H1 (cell line): ENCODE measurements at regions of chr2 and their contacts with region 1.

Region 1: DNA sequence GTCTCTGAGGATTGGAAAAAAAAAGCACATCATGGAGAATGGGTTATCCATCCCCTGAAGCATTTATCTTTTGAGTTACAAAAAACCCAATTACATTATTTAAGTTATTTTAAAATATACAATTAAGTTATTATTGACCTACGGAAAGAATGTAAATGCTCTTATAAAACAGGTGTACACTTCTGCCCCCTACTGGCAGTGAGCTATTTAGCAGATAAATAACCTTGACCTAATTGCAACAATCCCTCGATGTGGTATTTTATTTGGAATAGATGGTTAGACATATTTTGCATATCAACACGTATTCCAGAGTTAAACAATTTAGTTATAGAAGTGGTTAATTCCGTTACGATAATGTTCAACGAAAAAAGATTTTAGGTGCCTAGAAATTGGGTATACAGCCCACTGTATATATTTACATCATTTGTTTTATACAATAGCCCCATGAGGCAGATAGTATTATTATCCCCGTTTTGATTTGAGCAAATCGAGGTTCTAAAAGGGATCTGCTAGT is 9.1 kb upstream of the DAW1 start:
- DNase-seq: no peak
- H3K4me3 ChIP-seq: no peak overlapping the region
- H3K27ac ChIP-seq: no peak overlapping the region
- H3K4me1 ChIP-seq: peaks cover 3 to 11% (median 5%) of the 10 kb centered on the region in 4 experiments; a peak in 6 of 7 replicates
- H3K27me3 ChIP-seq: no peaks in the 10 kb centered on the region
- CTCF ChIP-seq: peak in 2 of 3 experiments; percentile 42 to 57; a peak in 2 of 4 replicates
- EP300 ChIP-seq: no peak
- POLR2A ChIP-seq: no peak
- RAD21 ChIP-seq: peak; percentile 48 to 50

Region 2: DNA sequence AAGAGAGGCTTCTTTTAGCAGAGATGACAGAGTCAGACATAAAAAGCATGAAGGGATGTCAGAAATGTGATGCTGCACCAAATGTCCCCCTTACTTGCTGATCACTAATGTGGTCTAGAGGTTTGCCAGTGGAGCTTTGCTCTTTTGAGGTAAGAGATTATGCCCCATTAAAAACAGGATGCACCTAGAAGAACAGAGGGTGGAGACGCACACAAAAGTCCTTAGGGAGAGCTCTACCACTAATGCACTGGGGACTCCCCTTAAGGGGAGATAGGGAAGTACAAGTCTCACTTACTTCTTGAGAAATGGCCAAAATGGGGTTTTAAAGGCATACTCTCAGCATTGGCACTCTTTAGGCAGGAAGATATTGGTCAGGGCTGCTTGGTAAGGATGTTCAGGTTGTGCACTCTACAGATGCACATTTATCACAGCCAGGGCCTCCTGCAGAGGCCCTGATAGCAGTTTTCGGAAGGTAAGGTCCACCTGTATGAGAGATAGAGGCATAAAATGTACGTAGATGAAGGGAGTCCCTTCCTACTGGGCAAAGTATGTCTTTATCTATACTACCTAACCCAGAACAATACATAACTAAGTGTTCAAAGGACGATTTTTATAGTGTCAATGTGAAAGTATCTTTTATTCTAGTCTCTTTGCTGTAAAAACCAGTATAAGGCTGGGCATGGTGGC is 457.6 kb before region 1 on chr2:
- CTCF ChIA-PET with region 1: no interaction called
- POLR2A ChIA-PET with region 1: no interaction called
- DNase-seq: no peak
- H3K4me3 ChIP-seq: no peak overlapping the region
- H3K27ac ChIP-seq: no peak overlapping the region
- H3K4me1 ChIP-seq: no peaks in the 10 kb centered on the region
- H3K27me3 ChIP-seq: no peaks in the 10 kb centered on the region
- CTCF ChIP-seq: peak in 1 of 3 experiments; percentile 17; a peak in 1 of 4 replicates
- EP300 ChIP-seq: no peak
- POLR2A ChIP-seq: no peak
- RAD21 ChIP-seq: no peak

Region 3: DNA sequence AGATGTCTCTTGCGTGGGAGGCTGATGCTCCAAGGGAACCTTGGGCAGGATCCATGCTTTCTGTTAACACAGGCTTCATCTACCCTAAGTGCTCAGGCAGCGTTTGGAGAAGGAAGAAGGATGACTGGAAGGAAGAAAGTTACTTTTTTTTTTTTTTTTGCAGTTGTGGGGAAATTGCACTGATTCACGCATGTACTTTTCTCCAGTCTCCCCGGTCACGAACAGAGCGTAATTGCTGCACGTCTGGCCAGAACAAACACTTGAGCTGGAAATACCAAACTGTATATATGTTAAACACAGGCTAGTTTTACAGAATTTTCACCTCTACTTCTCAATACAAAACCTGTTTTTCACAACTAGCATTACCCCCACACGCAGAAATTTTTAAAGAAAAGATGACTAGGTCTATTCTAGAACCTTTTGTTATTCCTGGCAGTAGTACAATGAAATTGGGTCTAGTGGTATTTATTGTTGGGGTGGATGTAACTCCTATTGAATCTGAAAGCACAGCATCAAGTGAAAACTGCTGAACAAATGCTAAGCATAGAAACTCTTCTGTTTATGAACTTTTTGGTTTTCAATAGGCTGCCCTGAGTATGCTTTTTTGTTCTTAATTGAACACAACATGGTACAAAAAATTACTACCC is 205.0 kb before region 1 on chr2:
- CTCF ChIA-PET with region 1: interaction called, 17 read pairs
- POLR2A ChIA-PET with region 1: no interaction called
- DNase-seq: no peak
- H3K4me3 ChIP-seq: no peak overlapping the region
- H3K27ac ChIP-seq: no peak overlapping the region
- H3K4me1 ChIP-seq: peaks cover 0 to 10% (median 4%) of the 10 kb centered on the region in 4 experiments; a peak in 4 of 7 replicates
- H3K27me3 ChIP-seq: no peaks in the 10 kb centered on the region
- CTCF ChIP-seq: no peak
- EP300 ChIP-seq: no peak
- POLR2A ChIP-seq: no peak
- RAD21 ChIP-seq: no peak

Region 4: DNA sequence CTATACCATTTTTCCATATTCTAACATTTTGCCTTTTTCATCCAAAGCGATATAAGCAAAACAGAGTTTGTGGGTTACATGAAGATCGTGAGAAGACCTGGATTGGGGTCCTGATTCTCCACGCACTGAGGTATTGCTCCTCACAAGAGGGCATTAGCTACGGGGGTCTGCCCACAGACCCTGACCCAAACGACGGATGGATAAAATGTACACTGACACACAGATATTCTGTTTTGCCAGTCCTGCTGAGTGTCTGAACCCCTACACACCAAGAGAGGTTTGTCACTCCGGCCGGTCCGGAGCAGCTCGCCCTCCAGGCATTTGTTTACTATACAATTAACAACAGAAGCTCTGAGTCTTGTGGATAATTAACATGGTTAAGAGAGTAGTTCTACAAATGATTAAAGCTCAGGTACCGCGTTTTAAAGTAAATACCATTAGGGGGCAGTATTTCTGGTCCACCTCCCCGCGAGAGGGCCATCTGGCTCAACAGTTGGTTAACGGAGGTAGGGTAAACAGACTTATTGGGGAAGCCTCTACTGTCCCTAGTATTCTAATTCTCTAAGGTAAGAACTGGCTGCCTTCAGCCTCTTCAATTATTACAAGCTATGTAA is 88.2 kb before region 1 on chr2:
- CTCF ChIA-PET with region 1: interaction called, 38 read pairs
- POLR2A ChIA-PET with region 1: no interaction called
- DNase-seq: peak in 1 of 2 experiments; percentile 49
- H3K4me3 ChIP-seq: no peak overlapping the region
- H3K27ac ChIP-seq: no peak overlapping the region
- H3K4me1 ChIP-seq: peaks cover 1 to 8% (median 3%) of the 10 kb centered on the region in 4 experiments; a peak in 3 of 7 replicates
- H3K27me3 ChIP-seq: no peaks in the 10 kb centered on the region
- CTCF ChIP-seq: peak; percentile 36 to 66 (median 56)
- EP300 ChIP-seq: no peak
- POLR2A ChIP-seq: no peak
- RAD21 ChIP-seq: peak; percentile 50 to 56

Region 5: GRCh38 chr2:227793148-227793712 is 69.1 kb before region 1 on chr2:
- CTCF ChIA-PET with region 1: interaction called, 15 read pairs
- POLR2A ChIA-PET with region 1: no interaction called
- DNase-seq: no peak
- H3K4me3 ChIP-seq: no peak overlapping the region
- H3K27ac ChIP-seq: no peak overlapping the region
- H3K4me1 ChIP-seq: no peaks in the 10 kb centered on the region
- H3K27me3 ChIP-seq: peaks cover 0 to 1% (median 0%) of the 10 kb centered on the region in 4 experiments; a peak in 1 of 7 replicates
- CTCF ChIP-seq: no peak
- EP300 ChIP-seq: no peak
- POLR2A ChIP-seq: no peak
- RAD21 ChIP-seq: no peak

Region 6: GRCh38 chr2:227817850-227818674 is 44.2 kb before region 1 on chr2:
- CTCF ChIA-PET with region 1: interaction called, 15 read pairs
- POLR2A ChIA-PET with region 1: no interaction called
- DNase-seq: peak in 1 of 2 experiments; percentile 15
- H3K4me3 ChIP-seq: no peak overlapping the region
- H3K27ac ChIP-seq: no peak overlapping the region
- H3K4me1 ChIP-seq: peaks cover 0 to 4% (median 2%) of the 10 kb centered on the region in 4 experiments; a peak in 3 of 7 replicates
- H3K27me3 ChIP-seq: no peaks in the 10 kb centered on the region; a peak in 1 of 7 replicates
- CTCF ChIP-seq: no peak
- EP300 ChIP-seq: no peak
- POLR2A ChIP-seq: no peak
- RAD21 ChIP-seq: no peak

Region 7: GRCh38 chr2:227848586-227848985 is 13.7 kb before region 1 on chr2:
- CTCF ChIA-PET with region 1: interaction called, 24 read pairs
- POLR2A ChIA-PET with region 1: no interaction called
- DNase-seq: no peak
- H3K4me3 ChIP-seq: no peak overlapping the region
- H3K27ac ChIP-seq: no peak overlapping the region
- H3K4me1 ChIP-seq: no peaks in the 10 kb centered on the region; a peak in 1 of 7 replicates
- H3K27me3 ChIP-seq: no peaks in the 10 kb centered on the region
- CTCF ChIP-seq: no peak
- EP300 ChIP-seq: no peak
- POLR2A ChIP-seq: no peak
- RAD21 ChIP-seq: no peak

Region 8: GRCh38 chr2:227884511-227884947 is 22.2 kb after region 1 on chr2:
- CTCF ChIA-PET with region 1: interaction called, 11 read pairs
- POLR2A ChIA-PET with region 1: no interaction called
- DNase-seq: peak; percentile 84 to 93
- H3K4me3 ChIP-seq: no peak overlapping the region
- H3K27ac ChIP-seq: no peak overlapping the region
- H3K4me1 ChIP-seq: no peaks in the 10 kb centered on the region
- H3K27me3 ChIP-seq: no peaks in the 10 kb centered on the region
- CTCF ChIP-seq: peak; percentile 94 to 98 (median 97)
- EP300 ChIP-seq: no peak
- POLR2A ChIP-seq: no peak
- RAD21 ChIP-seq: peak; percentile 67 to 78

Region 9: GRCh38 chr2:227960317-227960716 is 98.0 kb after region 1 on chr2:
- CTCF ChIA-PET with region 1: no interaction called
- POLR2A ChIA-PET with region 1: no interaction called
- DNase-seq: no peak
- H3K4me3 ChIP-seq: no peak overlapping the region
- H3K27ac ChIP-seq: no peak overlapping the region
- H3K4me1 ChIP-seq: no peaks in the 10 kb centered on the region
- H3K27me3 ChIP-seq: no peaks in the 10 kb centered on the region
- CTCF ChIP-seq: no peak
- EP300 ChIP-seq: no peak
- POLR2A ChIP-seq: no peak
- RAD21 ChIP-seq: no peak

Region 10: GRCh38 chr2:228164718-228165117 is 302.4 kb after region 1 on chr2:
- CTCF ChIA-PET with region 1: no interaction called
- POLR2A ChIA-PET with region 1: no interaction called
- DNase-seq: no peak
- H3K4me3 ChIP-seq: no peak overlapping the region
- H3K27ac ChIP-seq: no peak overlapping the region
- H3K4me1 ChIP-seq: no peaks in the 10 kb centered on the region
- H3K27me3 ChIP-seq: no peaks in the 10 kb centered on the region
- CTCF ChIP-seq: no peak
- EP300 ChIP-seq: no peak
- POLR2A ChIP-seq: no peak
- RAD21 ChIP-seq: no peak